ENCODE measurements at regions of chr20 and their contacts with region 1.

Region 1: GRCh38 chr20:10434467-10434831 is 427 bp upstream of the MKKS start:
- DNase-seq: peak; percentile 90 to 95 (median 92)
- H3K4me3 ChIP-seq: peak overlapping the region; percentile 54
- H3K27ac ChIP-seq: peak overlapping the region; percentile 78 to 83
- H3K4me1 ChIP-seq: peaks cover 7% of the 10 kb centered on the region
- H3K27me3 ChIP-seq: no peaks in the 10 kb centered on the region
- CTCF ChIP-seq: no peak
- EP300 ChIP-seq: no peak
- POLR2A ChIP-seq: peak; percentile 91

Region 2: GRCh38 chr20:10219452-10219791 is 215.0 kb before region 1 on chr20:
- intact Hi-C with region 1: loop called in 1 of 4 experiments (anchors 5 kb)
- DNase-seq: peak; percentile 81 to 93 (median 90)
- H3K4me3 ChIP-seq: peak overlapping the region; percentile 44
- H3K27ac ChIP-seq: peak overlapping the region; percentile 90 to 96
- H3K4me1 ChIP-seq: peaks cover 2% of the 10 kb centered on the region
- H3K27me3 ChIP-seq: no peaks in the 10 kb centered on the region
- CTCF ChIP-seq: no peak
- EP300 ChIP-seq: no peak
- POLR2A ChIP-seq: peak; percentile 33

Region 3: GRCh38 chr20:10611357-10611756 is 176.9 kb after region 1 on chr20:
- intact Hi-C with region 1: no loop called
- DNase-seq: peak in 2 of 5 donors; percentile 57 to 62
- H3K4me3 ChIP-seq: no peak overlapping the region
- H3K27ac ChIP-seq: no peak overlapping the region
- H3K4me1 ChIP-seq: peaks cover 13% of the 10 kb centered on the region
- H3K27me3 ChIP-seq: no peaks in the 10 kb centered on the region
- CTCF ChIP-seq: peak in 1 of 3 donors; percentile 11
- EP300 ChIP-seq: no peak
- POLR2A ChIP-seq: no peak

Region 4: DNA sequence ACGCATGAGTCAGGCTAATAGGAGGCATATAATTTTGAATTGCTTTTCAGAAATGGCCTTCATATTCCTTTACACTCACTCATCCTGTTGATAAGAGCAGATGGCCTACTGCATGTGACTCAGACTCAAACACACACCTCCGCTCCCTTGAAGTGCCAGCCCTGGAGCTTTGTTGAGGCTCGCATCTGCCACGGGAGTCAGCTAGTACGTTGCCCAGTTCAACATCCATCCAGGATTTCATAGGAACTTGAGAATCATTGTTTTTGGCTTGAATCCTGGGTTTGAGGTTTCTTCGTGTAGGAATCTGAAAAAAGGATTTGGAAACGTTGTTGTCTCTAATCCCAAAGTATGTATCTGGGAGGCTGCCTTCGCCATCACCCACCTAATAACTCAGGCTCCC is 326.8 kb after region 1 on chr20:
- intact Hi-C with region 1: no loop called
- DNase-seq: no peak
- H3K4me3 ChIP-seq: no peak overlapping the region
- H3K27ac ChIP-seq: no peak overlapping the region
- H3K4me1 ChIP-seq: no peaks in the 10 kb centered on the region
- H3K27me3 ChIP-seq: no peaks in the 10 kb centered on the region
- CTCF ChIP-seq: no peak
- EP300 ChIP-seq: no peak
- POLR2A ChIP-seq: no peak